Left ventricle myocardium superior (tissue), 1 donor: ENCODE measurements at regions of chr3 and their contacts with region 1.

Region 1: DNA sequence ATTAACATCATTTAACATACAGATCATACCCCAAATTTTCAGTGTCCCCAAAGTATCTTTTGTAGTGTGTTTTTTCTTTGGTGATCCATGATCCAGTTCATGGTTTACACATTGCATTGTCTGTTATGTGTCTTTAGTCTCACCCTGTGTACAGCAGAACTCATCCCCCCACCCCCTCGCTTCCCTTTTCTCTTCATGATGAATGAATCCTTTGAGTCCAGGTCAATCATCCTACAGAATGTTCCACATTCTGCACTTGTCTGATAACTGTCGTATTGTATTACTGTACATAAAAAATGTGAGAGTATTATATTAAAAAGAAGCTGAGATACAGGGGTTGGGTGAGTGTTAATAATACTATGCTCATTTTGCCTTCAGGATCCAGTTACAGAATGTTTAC is 14.6 kb upstream of the NIT2 start:
- DNase-seq: no peak
- ATAC-seq: no peak

Region 2: DNA sequence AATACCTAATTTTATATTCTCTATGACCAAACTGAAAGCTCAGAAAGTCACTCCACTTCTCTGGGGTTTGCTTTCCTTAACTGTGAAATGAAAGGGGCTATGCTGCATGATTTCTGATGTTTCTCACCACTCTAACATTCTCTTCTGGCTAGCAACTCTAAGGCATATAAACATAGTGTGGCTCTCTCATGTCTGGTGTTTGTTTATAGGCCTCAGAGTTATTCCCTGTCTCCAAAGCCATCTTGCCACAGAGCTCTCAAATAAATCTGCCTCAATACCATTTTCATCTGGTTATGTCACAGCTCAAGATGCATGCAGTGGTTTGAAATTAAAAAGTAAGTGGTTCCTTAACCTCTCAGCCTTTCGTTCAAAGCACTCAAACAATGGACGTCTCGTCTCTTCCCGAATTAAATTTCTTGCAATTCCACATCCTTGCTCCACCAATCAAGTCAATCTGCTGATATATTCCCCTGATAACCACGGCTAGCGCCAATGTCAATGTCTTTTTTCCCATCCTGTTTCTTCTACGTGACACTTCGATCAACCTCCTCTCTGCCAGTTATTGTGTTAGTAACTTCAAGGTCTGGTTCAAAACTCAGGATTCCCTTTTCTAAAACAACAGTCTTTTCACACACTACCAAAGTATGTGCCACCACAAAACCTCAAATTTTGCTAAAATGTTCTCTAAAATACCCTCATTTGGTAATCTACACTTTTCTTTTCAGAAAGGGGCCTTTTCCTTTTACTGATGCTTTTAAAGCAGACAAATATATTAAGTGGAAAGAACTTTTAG is 65.0 kb after region 1 on chr3:
- intact Hi-C with region 1: loop called (anchors 5 kb)
- DNase-seq: no peak
- ATAC-seq: no peak

Region 3: DNA sequence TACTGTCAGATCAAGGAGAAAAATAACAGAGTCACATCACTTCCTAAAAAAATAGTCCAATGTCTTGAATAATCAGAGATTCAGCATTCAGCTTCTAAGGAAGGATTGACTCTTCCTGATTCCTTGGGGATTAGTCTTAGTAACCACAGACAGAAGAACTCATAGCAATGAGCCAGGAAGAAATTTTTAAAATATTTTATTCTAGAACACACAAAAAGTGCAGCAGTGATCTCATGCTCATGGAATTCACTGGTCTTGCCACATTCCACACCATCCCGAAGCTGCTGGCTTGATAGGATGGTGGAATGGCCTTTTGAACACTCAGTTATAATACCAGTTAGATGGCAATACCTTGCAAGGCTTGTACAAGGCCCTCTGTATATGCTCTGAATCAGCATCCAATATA is 716.3 kb after region 1 on chr3:
- intact Hi-C with region 1: no loop called
- DNase-seq: no peak
- ATAC-seq: peak; percentile 42